ENCODE measurements at regions of chr1 and their contacts with region 1.

Region 1: DNA sequence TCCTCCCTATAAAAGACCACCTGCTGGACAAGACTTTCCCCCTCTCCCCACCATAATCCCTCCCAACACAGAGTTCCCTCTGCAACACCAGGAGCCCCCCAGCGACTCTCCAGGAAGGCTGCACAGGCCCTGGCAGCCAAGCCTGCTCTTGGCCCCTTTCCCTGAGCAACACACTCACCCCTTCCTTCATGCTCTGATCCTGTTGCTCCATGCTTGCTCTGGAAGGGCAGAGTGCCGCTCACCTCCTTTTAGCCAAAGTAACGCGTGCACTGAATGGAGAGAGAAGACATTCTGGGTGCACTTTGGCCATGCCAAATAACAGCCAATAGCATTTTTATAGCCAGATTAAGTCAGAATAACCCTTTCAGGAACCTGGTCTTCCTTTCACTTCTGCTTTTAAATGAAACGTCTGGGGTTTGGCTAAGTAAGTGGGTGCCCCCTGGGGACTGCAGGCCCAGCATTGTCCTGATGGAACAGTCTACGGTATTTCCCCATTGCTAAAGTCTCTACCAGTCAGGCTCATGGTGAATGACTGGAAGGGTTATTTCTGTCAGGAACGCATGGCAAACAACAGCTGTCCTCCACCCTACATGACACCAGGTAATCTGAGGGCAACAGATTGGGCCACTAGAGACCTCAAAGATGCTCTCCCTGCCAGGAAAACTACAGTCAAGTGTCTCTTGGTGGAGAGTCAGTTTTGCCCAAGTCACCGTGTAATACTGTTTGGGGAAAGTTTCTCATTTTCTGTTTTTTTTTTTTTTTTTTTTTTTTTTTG is at the start of gene SLC2A5:
- DNase-seq: peak; percentile 89 to 92
- ATAC-seq: peak; percentile 91 to 93
- H3K4me3 ChIP-seq: peak within 1 kb of the TSS; percentile 26 to 56 (median 32)
- H3K27ac ChIP-seq: peak within 1 kb of the TSS; percentile 86 to 98 (median 92)
- H3K4me1 ChIP-seq: peaks cover 54 to 55% of the 10 kb centered on the region in 2 donors
- H3K27me3 ChIP-seq: no peaks in the 10 kb centered on the region
- CTCF ChIP-seq: no peak
- POLR2A ChIP-seq: peak; percentile 41 to 63
- total RNA-seq, gene SLC2A5: 11.2 to 34.5 (median 22.8) TPM

Region 2: DNA sequence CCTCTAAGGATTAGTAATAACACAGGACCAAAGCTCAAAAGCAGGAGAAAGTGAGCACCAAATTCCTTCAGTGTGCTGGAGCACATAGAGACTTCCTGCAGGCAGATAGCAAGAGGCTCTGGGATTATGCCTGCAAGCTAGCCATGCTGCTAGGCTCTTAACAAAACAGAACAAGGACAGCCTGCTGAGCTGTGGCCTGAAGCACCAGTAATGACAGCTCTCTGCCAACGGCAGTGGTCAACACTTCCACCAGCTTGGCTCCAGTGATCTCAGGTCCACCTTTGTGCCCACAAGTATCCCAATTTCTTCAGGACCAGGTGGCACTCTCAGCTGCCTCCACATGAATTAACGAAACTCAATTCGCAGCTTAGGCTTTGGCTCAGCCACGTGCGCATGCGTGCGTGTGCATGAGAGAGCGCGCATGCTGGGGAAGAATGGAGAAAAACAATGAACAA is 687.4 kb before region 1 on chr1:
- in situ Hi-C with region 1: no loop called
- intact Hi-C with region 1: loop called (anchors 10 kb)
- DNase-seq: no peak
- ATAC-seq: no peak
- H3K4me3 ChIP-seq: no peak overlapping the region
- H3K27ac ChIP-seq: peak overlapping the region; percentile 90 to 95 (median 93)
- H3K4me1 ChIP-seq: peaks cover 98 to 99% of the 10 kb centered on the region in 2 donors
- H3K27me3 ChIP-seq: no peaks in the 10 kb centered on the region
- CTCF ChIP-seq: no peak
- POLR2A ChIP-seq: no peak

Region 3: GRCh38 chr1:9128520-9129265 is 59.2 kb after region 1 on chr1 and contains the start of gene GPR157:
- in situ Hi-C with region 1: no loop called
- intact Hi-C with region 1: loop called (anchors 1 kb)
- DNase-seq: peak; percentile 86 to 87
- ATAC-seq: peak; percentile 53 to 65
- H3K4me3 ChIP-seq: peak within 1 kb of the TSS; percentile 72 to 97 (median 82)
- H3K27ac ChIP-seq: peak within 1 kb of the TSS; percentile 94 to 99 (median 98)
- H3K4me1 ChIP-seq: peaks cover 26 to 39% of the 10 kb centered on the region in 2 donors
- H3K27me3 ChIP-seq: no peaks in the 10 kb centered on the region
- CTCF ChIP-seq: peak in 4 of 5 experiments; percentile 22 to 43 (median 37)
- POLR2A ChIP-seq: peak; percentile 96 to 97
- total RNA-seq, gene GPR157: 12.9 to 38.1 (median 18.9) TPM

Region 4: GRCh38 chr1:9143250-9143649 is 73.7 kb after region 1 on chr1:
- in situ Hi-C with region 1: no loop called
- intact Hi-C with region 1: no loop called
- DNase-seq: no peak
- ATAC-seq: peak in 1 of 2 donors; percentile 16
- H3K4me3 ChIP-seq: no peak overlapping the region
- H3K27ac ChIP-seq: no peak overlapping the region
- H3K4me1 ChIP-seq: no peaks in the 10 kb centered on the region
- H3K27me3 ChIP-seq: no peaks in the 10 kb centered on the region
- CTCF ChIP-seq: no peak
- POLR2A ChIP-seq: no peak

Region 5: DNA sequence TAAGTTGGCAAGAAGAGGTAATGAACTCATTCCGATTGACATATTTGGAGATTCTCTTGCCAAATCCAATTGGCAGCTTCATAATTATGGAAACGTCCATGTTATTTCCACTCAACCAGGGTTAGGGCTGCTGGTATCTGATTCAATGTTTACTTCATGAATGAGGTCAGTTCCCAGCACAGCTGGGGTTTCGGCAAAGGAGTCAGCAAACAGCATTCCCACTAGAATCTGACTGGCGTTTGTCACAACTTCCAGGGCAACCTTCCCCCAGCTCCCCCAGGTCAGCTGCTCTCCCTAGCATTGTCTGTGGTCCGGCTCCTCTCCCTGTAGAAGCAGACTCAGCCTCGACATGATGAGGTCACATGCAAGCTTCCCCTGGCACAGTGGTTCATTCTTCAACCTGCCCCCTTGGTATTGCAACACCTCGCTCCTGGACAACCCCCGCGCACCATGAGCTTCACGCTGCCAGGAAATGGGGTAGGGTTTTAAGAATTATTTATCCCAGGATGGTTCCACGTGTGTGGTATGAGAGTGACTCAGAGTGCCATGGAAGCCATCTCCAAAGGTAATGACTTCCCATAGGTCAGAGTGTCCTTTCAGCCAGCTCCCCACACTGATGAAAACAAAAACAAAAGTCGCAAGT is 369.0 kb after region 1 on chr1:
- in situ Hi-C with region 1: no loop called
- intact Hi-C with region 1: loop called (anchors 10 kb)
- DNase-seq: peak; percentile 77 to 82
- ATAC-seq: peak; percentile 46 to 51
- H3K4me3 ChIP-seq: no peak overlapping the region
- H3K27ac ChIP-seq: peak overlapping the region; percentile 61 to 96 (median 92)
- H3K4me1 ChIP-seq: peaks cover 69 to 76% of the 10 kb centered on the region in 2 donors
- H3K27me3 ChIP-seq: no peaks in the 10 kb centered on the region
- CTCF ChIP-seq: no peak
- POLR2A ChIP-seq: peak in 1 of 2 donors; percentile 28

Measured in gastrocnemius medialis (tissue), 4 donors.